ENCODE measurements at regions of chr2 and their contacts with region 1.

Region 1: DNA sequence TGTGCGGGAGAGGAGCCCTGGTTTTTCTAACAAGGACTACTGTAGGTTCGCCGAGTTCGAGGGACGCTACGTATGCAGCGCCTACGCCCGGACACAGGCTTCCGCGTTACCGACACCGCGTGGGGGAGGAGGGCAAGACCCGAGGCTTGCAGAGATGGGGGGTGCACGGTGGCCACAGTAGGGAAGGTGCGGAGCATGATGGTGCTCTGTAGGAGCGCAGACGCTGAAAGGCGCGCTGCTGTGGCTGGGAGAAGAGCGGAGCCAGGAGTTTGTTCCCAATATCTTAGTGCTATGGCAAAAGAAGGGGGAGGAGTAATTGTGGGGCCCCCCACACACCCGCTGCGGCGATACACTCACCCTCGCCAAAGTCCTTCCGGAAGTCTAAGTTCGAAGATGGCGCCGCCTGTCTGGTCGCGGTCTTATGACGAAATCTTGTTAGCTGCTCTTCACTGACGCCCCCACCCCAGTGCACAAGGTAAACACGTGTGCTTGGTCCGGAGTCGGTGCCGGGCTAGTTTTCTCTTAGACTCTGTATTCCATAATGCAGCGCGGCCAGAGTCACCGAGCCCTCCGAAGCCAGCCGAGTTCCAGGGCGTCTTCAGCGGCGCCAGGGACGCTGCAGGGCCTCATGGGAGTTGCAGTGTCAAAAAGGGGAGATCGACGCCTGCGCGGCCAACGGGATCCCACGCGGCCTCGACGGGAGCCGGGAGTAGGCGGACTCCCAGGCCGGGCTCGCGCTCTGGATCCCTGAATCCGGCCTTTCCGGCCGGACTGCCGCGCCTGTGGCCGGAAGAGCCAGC is at the start of gene GTF3C2:
- DNase-seq: peak; percentile 76 to 98 (median 90)
- ATAC-seq: peak; percentile 82
- H3K4me3 Mint-ChIP-seq: peak within 1 kb of the TSS; percentile 96 to 100 (median 98)
- H3K27ac Mint-ChIP-seq: peak within 1 kb of the TSS; percentile 97 to 100 (median 99)
- H3K4me1 Mint-ChIP-seq: peaks cover 19 to 63% (median 52%) of the 10 kb centered on the region in 4 donors
- H3K27me3 Mint-ChIP-seq: no peaks in the 10 kb centered on the region
- polyA plus RNA-seq, gene GTF3C2: 26.2 to 46.1 (median 31.3) TPM

Region 2: GRCh38 chr2:27322766-27323595 is 33.6 kb before region 1 on chr2 and contains the start of gene MPV17:
- POLR2A ChIA-PET with region 1: interaction called, 15 read pairs
- DNase-seq: peak; percentile 70 to 94 (median 81)
- ATAC-seq: peak; percentile 95 to 97
- H3K4me3 Mint-ChIP-seq: peak within 1 kb of the TSS; percentile 91 to 100 (median 98)
- H3K27ac Mint-ChIP-seq: peak within 1 kb of the TSS; percentile 97 to 100 (median 99)
- H3K4me1 Mint-ChIP-seq: peaks cover 12 to 32% (median 31%) of the 10 kb centered on the region in 4 donors
- H3K27me3 Mint-ChIP-seq: no peaks in the 10 kb centered on the region
- polyA plus RNA-seq, gene MPV17: 110 to 135 (median 124) TPM

Region 3: DNA sequence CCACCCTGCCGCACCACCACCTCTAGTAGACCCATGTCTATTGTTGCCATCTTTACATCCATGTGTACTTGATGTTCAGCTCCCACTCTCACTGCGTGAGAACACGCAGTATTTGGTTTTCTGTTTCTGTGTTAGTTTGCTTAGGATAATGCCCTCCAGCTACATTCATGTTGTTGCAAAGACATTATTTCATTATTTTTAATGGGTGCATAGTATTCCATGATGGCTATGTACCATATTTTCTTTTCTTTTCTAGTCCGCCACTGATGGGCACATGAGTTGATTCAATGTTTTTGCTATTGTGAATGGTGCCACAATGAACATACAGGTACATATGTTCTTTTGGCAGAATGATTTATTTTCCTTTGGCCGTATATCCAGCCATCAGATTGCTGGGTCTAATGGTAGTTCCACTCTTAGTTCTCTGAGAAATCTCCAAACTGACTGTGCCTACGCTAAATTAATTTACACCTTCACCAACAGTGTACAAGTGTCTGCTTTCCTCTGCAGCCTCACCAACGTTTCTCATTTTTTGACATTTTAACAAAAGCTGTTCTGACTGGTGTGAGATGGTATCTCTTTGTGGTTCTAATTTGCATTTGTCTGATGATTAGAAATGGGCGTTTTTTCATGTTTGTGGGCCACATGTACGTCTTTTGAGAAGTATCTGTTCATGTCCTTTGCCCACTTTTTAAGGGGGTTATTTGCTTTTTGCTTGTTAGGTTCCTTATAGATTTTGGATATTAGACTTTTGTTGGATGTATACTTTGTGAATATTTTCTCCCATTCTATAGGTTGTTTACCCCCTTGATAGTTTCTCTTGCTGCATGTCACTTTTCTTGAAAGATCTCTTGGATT is 34.5 kb after region 1 on chr2:
- POLR2A ChIA-PET with region 1: no interaction called
- DNase-seq: peak in 1 of 10 donors; percentile 25
- ATAC-seq: peak in 1 of 2 donors; percentile 66
- H3K4me3 Mint-ChIP-seq: peak overlapping the region in 5 of 10 donors; percentile 37 to 62 (median 44)
- H3K27ac Mint-ChIP-seq: peak overlapping the region in 9 of 10 donors; percentile 52 to 89 (median 80)
- H3K4me1 Mint-ChIP-seq: peaks cover 11 to 36% (median 25%) of the 10 kb centered on the region in 4 donors
- H3K27me3 Mint-ChIP-seq: no peaks in the 10 kb centered on the region

Region 4: DNA sequence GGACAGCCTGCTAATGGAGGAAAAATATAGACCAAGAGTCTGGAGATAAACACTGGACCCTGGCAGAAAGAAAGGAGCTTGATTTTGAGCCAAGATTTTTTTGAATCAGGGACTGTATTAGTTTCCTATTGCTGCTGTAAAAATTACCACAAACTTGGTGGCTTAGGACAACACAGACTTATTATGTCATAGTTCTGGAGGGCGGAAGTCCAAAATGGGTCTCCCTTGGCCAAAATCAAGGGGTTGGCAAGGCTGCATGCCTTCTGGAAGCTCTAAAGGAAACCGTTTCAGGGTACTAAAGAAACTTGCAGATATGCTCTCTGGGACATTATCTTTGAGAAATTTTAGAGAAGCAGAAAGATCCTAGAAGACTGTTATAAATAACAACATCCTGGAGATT is 674.0 kb after region 1 on chr2:
- POLR2A ChIA-PET with region 1: no interaction called
- DNase-seq: no peak
- ATAC-seq: no peak
- H3K4me3 Mint-ChIP-seq: no peak overlapping the region
- H3K27ac Mint-ChIP-seq: no peak overlapping the region
- H3K4me1 Mint-ChIP-seq: peaks cover 0 to 6% (median 2%) of the 10 kb centered on the region in 4 donors
- H3K27me3 Mint-ChIP-seq: no peaks in the 10 kb centered on the region